ENCODE measurements at regions of chr11 and their contacts with region 1.

Region 1: DNA sequence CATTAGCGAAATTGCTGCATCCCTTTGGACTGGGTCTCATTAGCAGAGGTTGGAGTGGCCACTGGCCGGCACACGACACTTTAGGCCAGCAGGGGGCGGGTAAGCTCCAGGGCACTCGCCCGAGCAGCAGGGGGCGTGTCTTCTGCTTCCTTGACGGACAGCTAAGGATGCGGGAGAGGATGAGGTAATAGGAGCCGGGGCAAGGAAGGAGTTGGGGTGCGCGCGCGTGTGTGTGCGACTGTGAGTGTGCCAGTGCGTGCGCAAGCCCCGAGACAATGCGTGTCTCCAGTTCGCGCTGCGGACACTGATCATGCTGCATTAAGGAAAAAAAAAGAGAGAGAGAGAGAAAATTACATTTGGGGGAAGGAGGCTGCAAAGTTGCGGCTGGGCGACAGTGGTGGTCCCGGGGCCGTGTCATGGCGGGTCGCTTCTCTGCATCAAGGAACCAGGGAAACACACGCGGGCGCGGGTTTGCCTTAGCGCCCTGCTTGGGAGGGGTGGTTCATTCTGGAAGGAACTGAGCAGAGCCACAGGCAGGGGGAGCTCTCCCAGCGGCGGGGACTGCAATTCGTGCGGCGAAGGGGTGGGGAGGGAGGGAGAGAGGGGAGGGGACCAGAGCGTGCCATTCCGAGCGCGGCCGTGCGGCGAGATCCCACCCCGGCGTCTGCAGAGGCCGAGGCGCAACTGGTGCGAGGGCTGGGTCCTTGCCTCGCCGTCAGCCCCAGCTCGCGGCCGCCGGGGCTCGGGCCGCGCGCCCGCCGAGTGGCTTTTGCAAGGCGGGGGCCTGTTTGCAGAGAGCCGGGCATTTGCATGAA is at the start of gene DTX4:
- DNase-seq: peak; percentile 27
- H3K4me3 ChIP-seq: peak within 1 kb of the TSS; percentile 59
- H3K27me3 ChIP-seq: no peaks in the 10 kb centered on the region; the same call in 1 of the 2 replicates
- CTCF ChIP-seq: peak; percentile 97
- polyA plus RNA-seq, gene DTX4: 0.98 and 1.2 TPM in 2 replicates

Region 2: GRCh38 chr11:58742981-58743880 is 428.5 kb before region 1 on chr11:
- CTCF ChIA-PET with region 1: no interaction called
- POLR2A ChIA-PET with region 1: no interaction called
- DNase-seq: no peak
- H3K4me3 ChIP-seq: no peak overlapping the region
- H3K27me3 ChIP-seq: no peaks in the 10 kb centered on the region
- CTCF ChIP-seq: no peak

Region 3: GRCh38 chr11:59025097-59025496 is 146.6 kb before region 1 on chr11:
- CTCF ChIA-PET with region 1: no interaction called
- POLR2A ChIA-PET with region 1: no interaction called
- DNase-seq: no peak
- H3K4me3 ChIP-seq: no peak overlapping the region
- H3K27me3 ChIP-seq: no peaks in the 10 kb centered on the region
- CTCF ChIP-seq: no peak

Region 4: GRCh38 chr11:59142530-59143507 is 28.9 kb before region 1 on chr11 and contains the start of gene FAM111A:
- CTCF ChIA-PET with region 1: interaction called, 16 read pairs
- POLR2A ChIA-PET with region 1: no interaction called
- DNase-seq: peak; percentile 35
- H3K4me3 ChIP-seq: peak within 1 kb of the TSS; percentile 98
- H3K27me3 ChIP-seq: no peaks in the 10 kb centered on the region
- CTCF ChIP-seq: peak; percentile 32; the same call in 1 of the 2 replicates
- polyA plus RNA-seq, gene FAM111A: 19.7 and 30.3 TPM in 2 replicates

Region 5: GRCh38 chr11:59186130-59186594 is 14.4 kb after region 1 on chr11:
- CTCF ChIA-PET with region 1: interaction called, 160 read pairs
- POLR2A ChIA-PET with region 1: interaction called, 6 read pairs
- DNase-seq: no peak
- H3K4me3 ChIP-seq: no peak overlapping the region
- H3K27me3 ChIP-seq: no peaks in the 10 kb centered on the region; the same call in 1 of the 2 replicates
- CTCF ChIP-seq: peak; percentile 64

Region 6: GRCh38 chr11:59207988-59208451 is 36.3 kb after region 1 on chr11:
- CTCF ChIA-PET with region 1: interaction called, 202 read pairs
- POLR2A ChIA-PET with region 1: no interaction called
- DNase-seq: peak; percentile 39
- H3K4me3 ChIP-seq: no peak overlapping the region
- H3K27me3 ChIP-seq: peaks cover 3% of the 10 kb centered on the region
- CTCF ChIP-seq: peak; percentile 73

Region 7: GRCh38 chr11:59224351-59224928 is 52.7 kb after region 1 on chr11:
- CTCF ChIA-PET with region 1: interaction called, 23 read pairs
- POLR2A ChIA-PET with region 1: no interaction called
- DNase-seq: no peak
- H3K4me3 ChIP-seq: no peak overlapping the region
- H3K27me3 ChIP-seq: no peaks in the 10 kb centered on the region
- CTCF ChIP-seq: no peak

Region 8: DNA sequence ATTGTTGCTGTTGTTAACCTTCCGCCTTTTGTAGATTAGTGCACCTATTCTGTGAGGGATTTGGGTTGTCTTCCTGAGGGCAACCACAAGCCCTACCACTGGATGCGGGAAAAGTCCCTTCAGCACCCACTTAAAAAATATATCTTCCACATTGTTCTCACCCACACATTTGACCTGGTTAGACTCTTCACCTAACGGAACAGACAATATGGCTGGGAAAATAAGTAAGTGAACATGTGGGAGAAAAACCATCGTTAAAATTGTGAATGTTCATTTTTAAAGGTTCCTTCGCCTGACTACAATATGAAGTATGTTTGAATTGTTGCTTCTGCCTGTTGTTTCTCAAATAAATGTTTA is 113.0 kb after region 1 on chr11:
- CTCF ChIA-PET with region 1: interaction called, 28 read pairs
- POLR2A ChIA-PET with region 1: no interaction called
- DNase-seq: no peak
- H3K4me3 ChIP-seq: no peak overlapping the region
- H3K27me3 ChIP-seq: no peaks in the 10 kb centered on the region
- CTCF ChIP-seq: no peak

Region 9: GRCh38 chr11:59429924-59430516 is 258.3 kb after region 1 on chr11:
- CTCF ChIA-PET with region 1: interaction called, 12 read pairs
- POLR2A ChIA-PET with region 1: no interaction called
- DNase-seq: no peak
- H3K4me3 ChIP-seq: no peak overlapping the region
- H3K27me3 ChIP-seq: no peaks in the 10 kb centered on the region
- CTCF ChIP-seq: peak; percentile 74

Region 10: GRCh38 chr11:59611570-59612565 is 440.2 kb after region 1 on chr11:
- CTCF ChIA-PET with region 1: no interaction called
- POLR2A ChIA-PET with region 1: no interaction called
- DNase-seq: no peak
- H3K4me3 ChIP-seq: no peak overlapping the region
- H3K27me3 ChIP-seq: no peaks in the 10 kb centered on the region
- CTCF ChIP-seq: no peak

Measured in BJ (cell line).